ENCODE measurements at regions of chr15 and their contacts with region 1.

Region 1: GRCh38 chr15:63466378-63467192 is 37.8 kb upstream of the USP3 start:
- DNase-seq: peak; percentile 87
- ATAC-seq: peak; percentile 95
- H3K4me3 ChIP-seq: no peak overlapping the region
- H3K4me3 Mint-ChIP-seq: no peak overlapping the region
- H3K27ac ChIP-seq: no peak overlapping the region
- H3K27ac Mint-ChIP-seq: peak overlapping the region; percentile 47
- H3K4me1 ChIP-seq: peaks cover 4 to 8% of the 10 kb centered on the region in 2 donors
- H3K4me1 Mint-ChIP-seq: peaks cover 31% of the 10 kb centered on the region
- H3K27me3 ChIP-seq: no peaks in the 10 kb centered on the region
- H3K27me3 Mint-ChIP-seq: no peaks in the 10 kb centered on the region
- CTCF ChIP-seq: peak; percentile 81

Region 2: GRCh38 chr15:63093486-63094205 is 372.9 kb before region 1 on chr15:
- CTCF ChIA-PET with region 1: no interaction called
- POLR2A ChIA-PET with region 1: no interaction called
- intact Hi-C with region 1: no loop called
- DNase-seq: peak; percentile 72
- ATAC-seq: peak; percentile 75
- H3K4me3 ChIP-seq: no peak overlapping the region
- H3K4me3 Mint-ChIP-seq: no peak overlapping the region
- H3K27ac ChIP-seq: no peak overlapping the region
- H3K27ac Mint-ChIP-seq: no peak overlapping the region
- H3K4me1 ChIP-seq: peaks cover 0 to 4% of the 10 kb centered on the region in 2 donors
- H3K4me1 Mint-ChIP-seq: peaks cover 2% of the 10 kb centered on the region
- H3K27me3 ChIP-seq: no peaks in the 10 kb centered on the region
- H3K27me3 Mint-ChIP-seq: no peaks in the 10 kb centered on the region
- CTCF ChIP-seq: peak; percentile 79

Region 3: GRCh38 chr15:63487076-63487757 is 20.6 kb after region 1 on chr15:
- CTCF ChIA-PET with region 1: interaction called, 132 read pairs
- POLR2A ChIA-PET with region 1: interaction called, 4 read pairs
- intact Hi-C with region 1: no loop called
- DNase-seq: peak; percentile 86
- ATAC-seq: peak; percentile 68
- H3K4me3 ChIP-seq: no peak overlapping the region
- H3K4me3 Mint-ChIP-seq: peak overlapping the region; percentile 80
- H3K27ac ChIP-seq: no peak overlapping the region
- H3K27ac Mint-ChIP-seq: peak overlapping the region; percentile 89
- H3K4me1 ChIP-seq: peaks cover 53 to 78% of the 10 kb centered on the region in 2 donors
- H3K4me1 Mint-ChIP-seq: peaks cover 64% of the 10 kb centered on the region
- H3K27me3 ChIP-seq: no peaks in the 10 kb centered on the region
- H3K27me3 Mint-ChIP-seq: no peaks in the 10 kb centered on the region
- CTCF ChIP-seq: peak; percentile 90

Region 4: DNA sequence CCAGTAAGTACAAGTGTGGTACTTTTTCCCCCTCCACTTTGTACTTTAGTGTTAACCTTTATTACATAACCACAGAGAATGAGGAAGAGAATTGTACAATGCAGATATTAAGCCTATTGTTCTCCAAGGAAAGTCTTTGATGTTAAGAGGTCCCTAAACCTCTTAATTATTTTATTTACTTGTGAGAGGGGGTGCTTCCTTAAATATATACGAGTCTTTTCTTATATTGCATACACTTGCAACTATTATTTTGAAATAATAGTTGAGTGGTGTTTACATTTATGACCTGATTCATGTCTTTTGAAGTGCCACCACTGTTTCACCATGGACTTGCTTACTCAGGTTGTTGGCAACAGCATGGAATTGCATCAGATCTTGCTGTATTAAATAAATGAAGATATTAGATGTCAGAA is 48.0 kb after region 1 on chr15:
- CTCF ChIA-PET with region 1: interaction called, 25 read pairs
- POLR2A ChIA-PET with region 1: no interaction called
- intact Hi-C with region 1: no loop called
- DNase-seq: no peak
- ATAC-seq: peak; percentile 37
- H3K4me3 ChIP-seq: no peak overlapping the region
- H3K4me3 Mint-ChIP-seq: peak overlapping the region; percentile 14
- H3K27ac ChIP-seq: peak overlapping the region in 1 of 2 donors; percentile 60
- H3K27ac Mint-ChIP-seq: no peak overlapping the region
- H3K4me1 ChIP-seq: peaks cover 66 to 87% of the 10 kb centered on the region in 2 donors
- H3K4me1 Mint-ChIP-seq: peaks cover 81% of the 10 kb centered on the region
- H3K27me3 ChIP-seq: no peaks in the 10 kb centered on the region
- H3K27me3 Mint-ChIP-seq: no peaks in the 10 kb centered on the region
- CTCF ChIP-seq: no peak

Region 5: DNA sequence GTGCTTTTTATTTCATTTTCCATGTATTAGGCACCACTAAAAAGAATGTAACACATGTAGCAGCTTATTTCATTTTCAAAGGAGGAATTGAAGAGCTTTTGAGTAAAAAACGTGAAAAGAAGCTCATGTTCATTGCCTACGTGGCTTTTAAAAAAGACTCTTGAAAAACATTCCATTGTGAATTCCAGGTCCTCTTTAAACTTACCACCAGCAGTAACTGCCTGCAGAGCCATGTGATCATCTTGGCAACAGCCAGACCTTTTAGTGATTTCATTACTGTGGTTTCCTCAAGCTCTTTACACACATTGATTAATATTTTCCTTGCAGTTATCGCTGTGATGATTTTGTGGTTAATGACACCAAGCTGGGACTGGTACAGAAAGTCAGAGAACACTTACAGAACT is 86.8 kb after region 1 on chr15:
- CTCF ChIA-PET with region 1: interaction called, 61 read pairs
- POLR2A ChIA-PET with region 1: no interaction called
- intact Hi-C with region 1: no loop called
- DNase-seq: no peak
- ATAC-seq: no peak
- H3K4me3 ChIP-seq: no peak overlapping the region
- H3K4me3 Mint-ChIP-seq: no peak overlapping the region
- H3K27ac ChIP-seq: peak overlapping the region in 1 of 2 donors; percentile 56
- H3K27ac Mint-ChIP-seq: peak overlapping the region; percentile 74
- H3K4me1 ChIP-seq: no peaks in the 10 kb centered on the region
- H3K4me1 Mint-ChIP-seq: peaks cover 14% of the 10 kb centered on the region
- H3K27me3 ChIP-seq: no peaks in the 10 kb centered on the region
- H3K27me3 Mint-ChIP-seq: no peaks in the 10 kb centered on the region
- CTCF ChIP-seq: no peak

Region 6: DNA sequence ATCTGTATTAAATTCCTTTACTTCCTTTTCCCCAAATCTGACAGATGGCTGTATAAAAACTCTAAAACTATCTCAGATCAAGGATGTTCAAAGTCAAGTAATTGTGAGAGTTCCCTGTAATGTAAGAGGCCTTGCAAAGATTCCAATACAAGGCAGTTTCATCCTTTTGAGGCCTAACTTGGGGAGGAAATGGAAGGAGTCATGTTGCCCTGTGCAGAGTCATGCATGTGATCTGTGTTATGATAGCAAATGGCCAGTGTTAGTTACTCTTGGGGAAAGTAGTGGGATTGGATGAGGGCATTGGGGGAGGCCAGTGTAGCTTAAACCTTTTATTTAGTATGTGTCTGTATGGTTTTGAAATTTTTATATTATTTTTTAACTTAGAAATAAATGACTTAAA is 106.9 kb after region 1 on chr15:
- CTCF ChIA-PET with region 1: interaction called, 14 read pairs
- POLR2A ChIA-PET with region 1: no interaction called
- intact Hi-C with region 1: no loop called
- DNase-seq: no peak
- ATAC-seq: no peak
- H3K4me3 ChIP-seq: no peak overlapping the region
- H3K4me3 Mint-ChIP-seq: no peak overlapping the region
- H3K27ac ChIP-seq: no peak overlapping the region
- H3K27ac Mint-ChIP-seq: peak overlapping the region; percentile 10
- H3K4me1 ChIP-seq: no peaks in the 10 kb centered on the region
- H3K4me1 Mint-ChIP-seq: no peaks in the 10 kb centered on the region
- H3K27me3 ChIP-seq: no peaks in the 10 kb centered on the region
- H3K27me3 Mint-ChIP-seq: no peaks in the 10 kb centered on the region
- CTCF ChIP-seq: no peak

Region 7: GRCh38 chr15:63610200-63610841 is 143.7 kb after region 1 on chr15:
- CTCF ChIA-PET with region 1: interaction called, 24 read pairs
- POLR2A ChIA-PET with region 1: no interaction called
- intact Hi-C with region 1: no loop called
- DNase-seq: peak; percentile 81
- ATAC-seq: peak; percentile 94
- H3K4me3 ChIP-seq: no peak overlapping the region
- H3K4me3 Mint-ChIP-seq: no peak overlapping the region
- H3K27ac ChIP-seq: peak overlapping the region; percentile 56 to 77
- H3K27ac Mint-ChIP-seq: peak overlapping the region; percentile 78
- H3K4me1 ChIP-seq: peaks cover 23 to 25% of the 10 kb centered on the region in 2 donors
- H3K4me1 Mint-ChIP-seq: peaks cover 24% of the 10 kb centered on the region
- H3K27me3 ChIP-seq: no peaks in the 10 kb centered on the region
- H3K27me3 Mint-ChIP-seq: no peaks in the 10 kb centered on the region
- CTCF ChIP-seq: peak; percentile 83

Region 8: DNA sequence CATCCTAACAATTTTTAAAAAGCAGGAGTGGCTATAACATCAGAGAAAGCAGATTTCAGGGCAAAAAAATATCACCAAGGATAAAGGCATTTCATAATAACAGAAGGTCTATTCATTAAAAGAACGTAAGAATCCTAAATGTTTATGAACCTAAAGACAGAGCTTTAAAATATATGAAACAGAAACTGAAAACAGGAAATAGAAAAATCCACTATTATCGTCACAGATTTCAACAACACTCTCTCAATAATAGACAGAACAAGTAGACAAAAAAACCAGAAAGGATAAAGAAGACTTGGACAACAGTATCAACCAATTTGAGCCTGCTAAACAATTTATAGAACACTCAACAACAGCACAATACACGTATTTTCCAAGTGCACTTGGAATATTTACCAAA is 202.0 kb after region 1 on chr15:
- CTCF ChIA-PET with region 1: no interaction called
- POLR2A ChIA-PET with region 1: no interaction called
- intact Hi-C with region 1: no loop called
- DNase-seq: peak; percentile 63
- ATAC-seq: peak; percentile 89
- H3K4me3 ChIP-seq: peak overlapping the region in 3 of 5 experiments; percentile 4 to 55 (median 30)
- H3K4me3 Mint-ChIP-seq: peak overlapping the region; percentile 66
- H3K27ac ChIP-seq: peak overlapping the region; percentile 83 to 85
- H3K27ac Mint-ChIP-seq: peak overlapping the region; percentile 75
- H3K4me1 ChIP-seq: peaks cover 12 to 14% of the 10 kb centered on the region in 2 donors
- H3K4me1 Mint-ChIP-seq: peaks cover 27% of the 10 kb centered on the region
- H3K27me3 ChIP-seq: no peaks in the 10 kb centered on the region
- H3K27me3 Mint-ChIP-seq: no peaks in the 10 kb centered on the region
- CTCF ChIP-seq: no peak